HEK293 (cell line): ENCODE measurements at regions of chr19 and their contacts with region 1.

Region 1: DNA sequence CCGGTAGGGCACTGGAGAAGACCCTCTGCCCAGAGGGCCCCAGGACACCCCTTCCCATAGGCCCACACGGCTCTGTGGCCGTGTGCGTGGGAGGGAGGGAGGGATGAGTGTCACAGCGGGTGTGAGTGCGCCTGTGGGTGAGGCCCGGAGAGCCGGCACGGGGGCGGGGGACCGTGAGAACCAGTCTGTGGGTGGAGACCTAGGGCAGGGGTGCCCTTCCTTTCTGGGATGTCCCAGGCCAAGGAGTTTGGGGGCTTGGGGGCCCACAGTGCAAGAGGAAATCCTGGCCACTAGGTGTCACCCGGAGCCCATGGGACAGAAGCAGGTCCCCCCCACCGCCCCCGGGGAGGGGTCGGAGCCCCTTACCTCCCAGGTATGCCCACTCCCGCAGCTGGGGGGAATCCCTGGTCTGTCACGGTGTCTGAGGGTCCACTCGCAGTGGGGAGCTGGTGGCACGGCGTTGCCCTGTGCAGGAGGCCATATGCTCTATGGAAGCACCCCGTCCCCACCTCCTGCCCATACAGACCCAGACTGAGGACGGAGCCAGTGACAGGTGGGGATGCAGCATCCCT is 16.0 kb upstream of the SLC7A10 start:
- H3K4me3 ChIP-seq: no peak overlapping the region
- H3K27ac ChIP-seq: no peak overlapping the region
- H3K4me1 ChIP-seq: peaks cover 2% of the 10 kb centered on the region; the same call in 1 of the 2 replicates
- CTCF ChIP-seq: peak; percentile 98

Region 2: GRCh38 chr19:32924203-32924930 is 317.2 kb before region 1 on chr19:
- CTCF ChIA-PET with region 1: no interaction called
- POLR2A ChIA-PET with region 1: no interaction called
- H3K4me3 ChIP-seq: no peak overlapping the region
- H3K27ac ChIP-seq: no peak overlapping the region
- H3K4me1 ChIP-seq: no peaks in the 10 kb centered on the region
- CTCF ChIP-seq: no peak

Region 3: DNA sequence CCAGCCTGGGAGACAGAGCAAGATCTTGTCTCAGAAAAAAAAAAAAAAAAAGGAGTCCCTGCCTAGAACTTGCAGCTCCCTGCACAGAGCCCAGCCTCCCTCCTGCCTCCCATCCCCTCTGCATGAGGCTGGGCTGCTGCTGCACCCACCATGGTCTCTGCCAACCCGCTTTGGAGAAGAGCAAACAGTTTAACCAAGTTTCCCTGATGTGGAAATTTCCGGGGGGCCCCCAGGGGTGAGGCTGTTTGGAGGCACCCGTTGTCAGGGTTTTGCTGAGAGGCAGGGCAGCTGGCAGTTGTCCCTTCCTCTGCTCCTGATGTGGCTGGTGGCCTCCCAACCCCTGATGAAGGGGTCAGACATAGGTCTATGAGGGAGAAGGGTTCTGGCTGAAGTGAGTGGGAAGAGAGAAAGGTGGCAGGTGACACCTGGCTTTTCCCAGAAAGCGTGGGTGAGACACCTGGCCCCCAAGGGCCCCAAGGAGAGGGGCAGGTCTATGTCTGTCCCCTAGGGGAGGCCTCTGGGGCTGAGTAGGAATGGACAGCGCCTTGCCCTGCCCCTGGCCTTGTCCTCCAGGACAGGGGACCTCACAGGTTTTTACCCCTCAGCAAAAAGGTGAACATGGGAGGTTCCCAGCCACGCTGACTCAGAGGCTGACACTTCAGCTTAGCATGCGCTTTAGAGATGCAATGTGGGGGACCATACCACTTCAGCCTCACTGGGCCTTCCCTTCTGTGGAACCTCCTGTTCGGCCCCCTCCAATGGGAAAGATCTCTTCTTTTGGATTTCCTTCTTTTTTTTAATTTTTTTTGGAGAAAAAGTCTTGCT is 42.0 kb before region 1 on chr19:
- CTCF ChIA-PET with region 1: no interaction called
- POLR2A ChIA-PET with region 1: no interaction called
- H3K4me3 ChIP-seq: no peak overlapping the region
- H3K27ac ChIP-seq: peak overlapping the region; percentile 55; the same call in 1 of the 2 replicates
- H3K4me1 ChIP-seq: peaks cover 10% of the 10 kb centered on the region
- CTCF ChIP-seq: no peak

Region 4: DNA sequence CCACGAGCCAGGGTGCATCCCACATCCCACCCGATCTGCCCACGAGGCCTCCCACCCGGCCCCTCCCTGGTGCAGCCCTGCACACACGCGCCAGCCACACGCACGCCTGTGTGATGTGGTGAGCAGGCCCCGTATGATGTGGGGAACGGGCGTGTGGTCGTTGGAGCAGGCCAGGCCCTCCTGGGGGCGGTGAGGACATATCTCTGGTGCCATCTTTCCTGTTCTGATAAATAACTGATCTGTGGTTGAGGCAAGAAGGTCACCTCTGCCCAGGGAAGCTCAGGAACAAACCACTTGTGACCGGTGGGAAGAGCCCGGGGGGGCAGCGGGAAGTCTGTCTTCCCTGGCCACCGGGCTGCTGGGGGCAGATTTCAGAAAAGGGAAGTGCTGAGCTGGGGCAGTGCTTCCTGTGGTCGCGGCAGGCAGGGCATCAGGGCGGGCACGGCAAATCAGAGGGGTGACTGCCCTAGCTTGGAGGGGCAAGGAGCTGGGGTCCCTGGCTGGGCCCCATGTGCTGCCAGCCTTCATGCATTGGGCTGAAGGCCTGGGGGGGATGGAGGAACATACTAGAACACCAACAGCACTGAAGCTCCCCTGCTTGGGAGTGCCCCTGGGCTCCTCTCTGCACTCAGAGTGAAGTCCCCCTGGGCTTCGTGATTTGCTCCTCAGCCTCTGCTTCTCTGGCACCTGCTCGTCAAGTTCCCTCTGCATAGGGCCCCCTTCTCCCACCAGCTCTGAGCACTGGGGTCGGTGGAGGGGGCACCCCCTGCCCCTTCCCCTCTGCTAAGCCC is 19.2 kb after region 1 on chr19:
- CTCF ChIA-PET with region 1: interaction called, 36 read pairs
- POLR2A ChIA-PET with region 1: no interaction called
- H3K4me3 ChIP-seq: no peak overlapping the region
- H3K27ac ChIP-seq: no peak overlapping the region
- H3K4me1 ChIP-seq: no peaks in the 10 kb centered on the region; the same call in 1 of the 2 replicates
- CTCF ChIP-seq: no peak

Region 5: DNA sequence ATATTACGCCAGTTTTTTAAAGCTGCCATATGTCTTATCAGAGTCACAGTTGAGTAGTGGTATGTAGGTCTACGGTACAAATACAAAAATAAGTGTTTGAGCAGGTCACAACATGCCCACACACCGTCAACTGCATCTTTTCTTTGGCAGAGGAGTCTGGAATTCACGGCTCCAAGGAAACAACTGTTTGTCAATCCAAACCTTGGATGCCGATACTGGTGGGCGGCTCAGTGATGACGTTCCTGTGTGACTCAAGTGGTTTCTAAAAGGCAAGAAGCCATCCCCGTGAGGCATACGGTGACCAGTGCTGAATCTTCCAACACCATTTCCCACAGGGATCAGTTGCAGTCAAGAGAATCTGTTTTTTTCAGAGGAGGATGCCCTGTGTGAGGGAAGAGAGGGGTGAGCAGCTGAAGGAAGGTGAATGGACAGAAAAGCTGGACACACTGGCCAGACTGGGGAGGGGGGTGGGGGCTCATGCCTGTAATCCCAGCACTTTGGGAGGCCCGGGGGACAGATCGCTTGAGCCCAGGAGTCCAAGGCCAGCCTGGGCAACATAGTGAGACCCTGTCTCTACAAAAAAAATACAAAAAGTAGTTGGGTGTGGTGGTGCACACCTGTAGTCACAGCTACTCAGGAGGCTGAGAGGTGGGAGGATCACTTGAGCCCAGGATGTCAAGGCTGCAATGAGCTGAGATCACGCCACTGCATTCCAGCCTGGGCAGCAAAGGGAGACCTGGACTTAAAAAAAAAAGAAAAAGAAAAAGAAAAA is 109.1 kb after region 1 on chr19:
- CTCF ChIA-PET with region 1: no interaction called
- POLR2A ChIA-PET with region 1: no interaction called
- H3K4me3 ChIP-seq: no peak overlapping the region
- H3K27ac ChIP-seq: no peak overlapping the region
- H3K4me1 ChIP-seq: peaks cover 21% of the 10 kb centered on the region
- CTCF ChIP-seq: no peak

Region 6: GRCh38 chr19:33397536-33398360 is 156.1 kb after region 1 on chr19:
- CTCF ChIA-PET with region 1: interaction called, 38 read pairs
- POLR2A ChIA-PET with region 1: interaction called, 3 read pairs
- H3K4me3 ChIP-seq: no peak overlapping the region
- H3K27ac ChIP-seq: no peak overlapping the region
- H3K4me1 ChIP-seq: no peaks in the 10 kb centered on the region
- CTCF ChIP-seq: peak; percentile 86

Region 7: DNA sequence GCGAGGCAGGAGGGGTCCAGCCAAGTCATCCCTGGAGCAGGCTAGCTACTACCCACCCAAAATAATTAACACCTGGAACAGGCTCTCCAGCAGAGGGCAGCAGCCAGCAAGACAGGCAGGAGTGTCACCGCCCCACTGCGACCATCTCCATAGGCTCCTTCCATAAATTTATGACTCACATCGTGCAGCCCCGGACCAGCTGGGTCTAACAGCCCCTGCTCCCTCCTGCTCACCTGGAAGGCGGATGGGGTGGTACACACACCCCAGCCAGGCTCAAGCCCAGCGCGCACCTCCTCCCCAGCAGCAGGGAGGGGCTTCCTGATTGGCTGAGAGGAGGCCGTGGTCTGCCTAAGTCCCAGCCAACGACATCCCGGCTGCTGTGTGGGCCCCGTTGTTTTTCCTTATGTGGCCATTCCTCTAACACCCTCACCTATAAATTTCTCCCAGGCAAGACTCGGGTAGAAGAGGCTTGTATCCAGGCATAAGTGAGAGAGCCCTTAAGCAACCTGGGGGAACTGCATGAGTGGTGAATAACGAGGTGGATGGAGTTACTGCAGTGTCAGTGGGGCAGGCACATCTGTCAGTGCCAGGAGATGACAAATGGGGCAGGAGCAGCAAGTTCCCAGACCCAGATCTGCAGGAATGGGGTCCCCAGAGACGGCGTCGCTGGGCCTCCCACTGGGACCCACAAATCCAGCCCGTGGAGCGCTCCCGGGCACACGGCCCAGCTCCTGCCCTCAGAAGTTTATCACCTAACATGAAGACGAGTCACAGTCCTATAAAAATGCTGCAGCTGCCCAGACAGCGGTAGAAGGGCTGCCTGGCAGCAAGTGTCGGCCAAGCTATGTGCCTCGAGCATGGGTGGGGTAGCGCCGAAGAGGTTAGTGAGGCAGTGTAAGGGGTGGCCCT is 174.9 kb after region 1 on chr19:
- CTCF ChIA-PET with region 1: interaction called, 34 read pairs
- POLR2A ChIA-PET with region 1: no interaction called
- H3K4me3 ChIP-seq: no peak overlapping the region
- H3K27ac ChIP-seq: peak overlapping the region; percentile 49; the same call in 1 of the 2 replicates
- H3K4me1 ChIP-seq: peaks cover 7% of the 10 kb centered on the region
- CTCF ChIP-seq: peak; percentile 98